ENCODE measurements at regions of chr19 and their contacts with region 1.

Region 1: DNA sequence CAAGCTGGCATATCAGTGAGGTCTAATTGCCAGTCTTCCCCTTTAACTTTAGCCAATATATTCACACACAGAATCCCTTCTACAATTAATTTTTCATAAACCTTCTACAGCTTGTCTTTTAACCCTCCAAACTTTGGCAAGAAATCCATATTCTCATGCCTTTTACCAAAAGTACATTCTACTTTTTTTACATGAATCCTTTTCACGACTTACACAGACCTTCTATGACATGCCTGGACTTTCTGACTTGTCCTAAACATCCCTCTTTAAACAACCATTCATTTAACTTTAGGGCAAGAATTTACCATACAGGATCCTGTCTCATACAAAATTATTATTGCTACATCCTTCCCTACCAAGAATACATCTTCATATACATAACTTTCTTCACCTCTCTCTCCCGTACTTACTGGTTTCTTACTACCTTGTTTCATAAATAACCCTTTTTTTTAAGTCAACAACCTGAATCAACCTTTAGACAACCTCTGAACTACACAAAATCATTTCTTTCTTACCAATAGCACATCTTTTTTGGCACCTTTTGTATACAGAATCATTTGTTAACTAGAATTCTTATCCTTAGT is 23.5 kb downstream of the ZNF544 start:
- DNase-seq: no peak
- H3K4me3 ChIP-seq: no peak overlapping the region
- H3K27ac ChIP-seq: no peak overlapping the region
- H3K4me1 ChIP-seq: no peaks in the 10 kb centered on the region
- H3K27me3 ChIP-seq: no peaks in the 10 kb centered on the region
- CTCF ChIP-seq: no peak
- POLR2A ChIP-seq: no peak

Region 2: GRCh38 chr19:58218899-58219298 is 33.3 kb before region 1 on chr19:
- intact Hi-C with region 1: loop called (anchors 1 kb)
- DNase-seq: no peak
- H3K4me3 ChIP-seq: no peak overlapping the region
- H3K27ac ChIP-seq: no peak overlapping the region
- H3K4me1 ChIP-seq: no peaks in the 10 kb centered on the region
- H3K27me3 ChIP-seq: no peaks in the 10 kb centered on the region
- CTCF ChIP-seq: no peak
- POLR2A ChIP-seq: no peak

Region 3: GRCh38 chr19:58278157-58279041 is 26.2 kb after region 1 on chr19 and contains the start of gene ZNF8:
- intact Hi-C with region 1: no loop called
- DNase-seq: peak; percentile 93 to 95
- H3K4me3 ChIP-seq: peak within 1 kb of the TSS; percentile 94 to 95 (median 94)
- H3K27ac ChIP-seq: peak within 1 kb of the TSS; percentile 87 to 88
- H3K4me1 ChIP-seq: no peaks in the 10 kb centered on the region
- H3K27me3 ChIP-seq: no peaks in the 10 kb centered on the region
- CTCF ChIP-seq: no peak
- POLR2A ChIP-seq: peak; percentile 25
- total RNA-seq, gene ZNF8: 4.2 to 10.8 (median 9.2) TPM

Measured in breast epithelium (tissue), 4 donors.